ENCODE measurements at regions of chr12 and their contacts with region 1.

Region 1: DNA sequence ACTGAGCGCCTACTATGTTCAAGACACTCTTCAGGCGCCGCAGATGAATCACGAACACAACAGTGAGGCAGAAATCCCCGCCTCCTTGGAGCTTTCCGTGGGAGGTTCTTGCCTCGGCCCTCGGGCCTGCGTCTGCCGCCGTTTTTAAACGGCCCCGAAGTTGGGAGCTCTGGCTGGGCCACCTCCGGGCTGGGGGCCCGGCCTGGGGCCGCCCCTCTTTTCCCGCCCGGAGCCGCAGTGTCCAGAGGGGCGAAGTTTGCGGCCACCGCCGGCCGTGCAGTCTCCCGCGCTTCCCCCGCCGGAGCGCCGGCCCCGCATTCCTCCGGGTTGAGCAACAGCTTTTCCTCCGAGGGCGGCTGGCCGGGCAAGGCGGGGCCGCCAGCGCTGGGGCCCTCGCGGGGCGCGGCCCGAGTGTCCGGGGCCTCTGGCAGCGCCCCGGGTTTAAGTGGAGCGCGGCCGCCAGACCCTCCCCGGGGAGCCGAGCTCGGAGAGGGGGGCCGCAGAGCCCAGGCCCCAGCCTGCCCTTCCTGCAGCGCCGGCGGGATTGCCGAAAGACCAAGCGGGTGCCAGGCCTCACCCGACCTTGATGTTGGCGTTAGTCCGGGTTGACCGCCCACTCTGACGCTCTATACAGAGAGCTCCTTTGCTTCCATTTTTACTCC is 18.7 kb upstream of the CTDSP2 start:
- H3K4me3 ChIP-seq: peak overlapping the region; percentile 37
- H3K27ac ChIP-seq: peak overlapping the region; percentile 62; the same call in 1 of the 2 replicates
- H3K4me1 ChIP-seq: no peaks in the 10 kb centered on the region
- CTCF ChIP-seq: no peak

Region 2: DNA sequence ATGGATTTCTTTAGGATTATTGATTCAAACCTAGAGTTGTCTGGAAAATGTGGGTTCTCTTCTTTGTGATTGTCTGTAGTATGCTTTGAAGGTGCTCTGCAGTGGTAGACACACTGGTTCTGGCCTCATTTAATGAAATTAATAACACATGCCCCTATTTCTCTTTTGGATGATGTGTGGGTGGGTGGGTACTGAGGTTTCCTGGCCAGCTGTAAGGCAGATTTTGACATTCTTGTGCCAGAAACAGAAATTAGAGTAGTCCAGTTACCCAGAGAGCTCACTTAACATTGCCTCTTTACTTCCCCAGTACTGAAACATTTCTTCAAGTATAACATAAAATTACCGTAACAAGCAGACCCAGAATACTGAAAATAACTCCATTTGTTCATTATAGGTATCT is 68.2 kb before region 1 on chr12:
- CTCF ChIA-PET with region 1: no interaction called
- POLR2A ChIA-PET with region 1: no interaction called
- H3K4me3 ChIP-seq: no peak overlapping the region
- H3K27ac ChIP-seq: no peak overlapping the region
- H3K4me1 ChIP-seq: no peaks in the 10 kb centered on the region
- CTCF ChIP-seq: no peak

Region 3: GRCh38 chr12:57941165-57941894 is 76.1 kb after region 1 on chr12 and contains the start of gene ATP23:
- CTCF ChIA-PET with region 1: no interaction called
- POLR2A ChIA-PET with region 1: interaction called, 12 read pairs
- H3K4me3 ChIP-seq: peak within 1 kb of the TSS; percentile 73
- H3K27ac ChIP-seq: peak within 1 kb of the TSS; percentile 75
- H3K4me1 ChIP-seq: 0 out of 2 replicates have a peak, but pooled peaks cover 2% of the 10 kb centered on the region
- CTCF ChIP-seq: no peak